IMR-90 (cell line): ENCODE measurements at regions of chr20 and their contacts with region 1.

Region 1: GRCh38 chr20:40868551-40869217 is 159.9 kb upstream of the TOP1 start:
- DNase-seq: peak; percentile 85
- ATAC-seq: peak; percentile 88
- H3K4me3 ChIP-seq: no peak overlapping the region
- H3K27ac ChIP-seq: peak overlapping the region; percentile 3; the same call in 1 of the 2 replicates
- H3K4me1 ChIP-seq: peaks cover 13% of the 10 kb centered on the region; the same call in 1 of the 2 replicates
- H3K27me3 ChIP-seq: no peaks in the 10 kb centered on the region
- CTCF ChIP-seq: no peak
- POLR2A ChIP-seq: no peak
- RAD21 ChIP-seq: no peak

Region 2: GRCh38 chr20:40797425-40797824 is 71.3 kb before region 1 on chr20:
- CTCF ChIA-PET with region 1: no interaction called
- POLR2A ChIA-PET with region 1: no interaction called
- dilution Hi-C with region 1: no loop called
- in situ Hi-C with region 1: no loop called
- intact Hi-C with region 1: no loop called
- DNase-seq: peak; percentile 17
- ATAC-seq: peak; percentile 40; the same call in 1 of the 2 replicates
- H3K4me3 ChIP-seq: no peak overlapping the region
- H3K27ac ChIP-seq: no peak overlapping the region
- H3K4me1 ChIP-seq: no peaks in the 10 kb centered on the region
- H3K27me3 ChIP-seq: no peaks in the 10 kb centered on the region
- CTCF ChIP-seq: peak; percentile 51
- POLR2A ChIP-seq: no peak
- RAD21 ChIP-seq: peak; percentile 38

Region 3: GRCh38 chr20:40902661-40903060 is 34.0 kb after region 1 on chr20:
- CTCF ChIA-PET with region 1: no interaction called
- POLR2A ChIA-PET with region 1: no interaction called
- dilution Hi-C with region 1: no loop called
- in situ Hi-C with region 1: no loop called
- intact Hi-C with region 1: loop called (anchors 1 kb)
- DNase-seq: no peak
- ATAC-seq: no peak
- H3K4me3 ChIP-seq: no peak overlapping the region
- H3K27ac ChIP-seq: no peak overlapping the region
- H3K4me1 ChIP-seq: no peaks in the 10 kb centered on the region
- H3K27me3 ChIP-seq: no peaks in the 10 kb centered on the region
- CTCF ChIP-seq: no peak
- POLR2A ChIP-seq: no peak
- RAD21 ChIP-seq: no peak